ENCODE measurements at regions of chr21 and their contacts with region 1.

Region 1: GRCh38 chr21:29024474-29025327 is at the start of gene USP16:
- DNase-seq: peak; percentile 96
- H3K4me3 Mint-ChIP-seq: peak within 1 kb of the TSS; percentile 96
- H3K27ac Mint-ChIP-seq: peak within 1 kb of the TSS; percentile 99
- H3K4me1 Mint-ChIP-seq: peaks cover 28% of the 10 kb centered on the region
- H3K27me3 Mint-ChIP-seq: no peaks in the 10 kb centered on the region
- total RNA-seq, gene USP16: 40.9 and 44.1 TPM in 2 replicates

Region 2: GRCh38 chr21:28992526-28993292 is 32.0 kb before region 1 on chr21 and contains the start of gene LTN1:
- intact Hi-C with region 1: loop called (anchors 1 kb)
- DNase-seq: peak; percentile 99
- H3K4me3 Mint-ChIP-seq: peak within 1 kb of the TSS; percentile 95
- H3K27ac Mint-ChIP-seq: peak within 1 kb of the TSS; percentile 95
- H3K4me1 Mint-ChIP-seq: peaks cover 30% of the 10 kb centered on the region
- H3K27me3 Mint-ChIP-seq: no peaks in the 10 kb centered on the region
- total RNA-seq, gene LTN1: 24.9 and 27.5 TPM in 2 replicates

Region 3: DNA sequence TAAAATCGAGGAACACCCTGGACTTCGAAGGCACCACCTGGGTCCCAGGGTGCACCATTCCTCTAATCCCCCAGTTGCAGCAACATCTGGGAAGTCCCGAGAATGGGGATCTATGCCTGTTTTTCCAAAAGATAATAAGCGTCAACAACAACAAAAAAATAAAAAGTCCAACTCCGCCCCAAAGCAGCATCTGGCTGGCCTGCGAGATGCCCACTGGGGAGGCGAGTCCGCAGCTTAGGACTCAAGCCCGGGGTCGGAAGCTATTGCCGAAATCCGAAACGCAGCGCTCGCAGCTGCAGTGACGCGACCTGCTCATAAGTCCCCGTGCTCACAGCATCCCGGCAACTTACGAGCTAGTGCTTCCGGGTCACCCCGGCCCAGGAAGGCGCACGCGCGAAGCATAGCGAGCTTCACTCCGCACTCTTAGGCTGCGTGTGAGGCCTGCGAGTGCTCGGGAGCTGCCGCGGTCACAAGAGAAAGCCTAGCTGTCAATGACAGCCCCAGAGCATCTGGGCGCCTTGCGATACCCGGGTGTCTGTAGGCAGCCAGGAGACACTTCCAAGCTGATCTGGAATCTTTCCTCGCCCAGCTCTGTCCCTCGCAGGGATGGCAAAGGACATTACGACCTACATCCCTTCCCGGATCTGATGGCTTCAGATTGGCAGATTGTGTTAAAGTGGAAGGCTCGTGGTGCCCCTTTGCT is 22.1 kb before region 1 on chr21:
- intact Hi-C with region 1: loop called (anchors 1 kb)
- DNase-seq: peak; percentile 93
- H3K4me3 Mint-ChIP-seq: peak overlapping the region; percentile 86
- H3K27ac Mint-ChIP-seq: peak overlapping the region; percentile 93
- H3K4me1 Mint-ChIP-seq: peaks cover 2% of the 10 kb centered on the region
- H3K27me3 Mint-ChIP-seq: no peaks in the 10 kb centered on the region

Measured in activated T-helper 2 cell treated with anti-CD3 and anti-CD28 coated beads, Interferon-gamma antibody, Interleukin-2, Interleukin-4, amounts not matched to agents 10 μg/mL and 5 μg/mL and 100 μg/mL, durations not matched to agents 14 hours and 24 hours and 36 hours (primary cell).